ENCODE measurements at regions of chr11 and their contacts with region 1.

Region 1: DNA sequence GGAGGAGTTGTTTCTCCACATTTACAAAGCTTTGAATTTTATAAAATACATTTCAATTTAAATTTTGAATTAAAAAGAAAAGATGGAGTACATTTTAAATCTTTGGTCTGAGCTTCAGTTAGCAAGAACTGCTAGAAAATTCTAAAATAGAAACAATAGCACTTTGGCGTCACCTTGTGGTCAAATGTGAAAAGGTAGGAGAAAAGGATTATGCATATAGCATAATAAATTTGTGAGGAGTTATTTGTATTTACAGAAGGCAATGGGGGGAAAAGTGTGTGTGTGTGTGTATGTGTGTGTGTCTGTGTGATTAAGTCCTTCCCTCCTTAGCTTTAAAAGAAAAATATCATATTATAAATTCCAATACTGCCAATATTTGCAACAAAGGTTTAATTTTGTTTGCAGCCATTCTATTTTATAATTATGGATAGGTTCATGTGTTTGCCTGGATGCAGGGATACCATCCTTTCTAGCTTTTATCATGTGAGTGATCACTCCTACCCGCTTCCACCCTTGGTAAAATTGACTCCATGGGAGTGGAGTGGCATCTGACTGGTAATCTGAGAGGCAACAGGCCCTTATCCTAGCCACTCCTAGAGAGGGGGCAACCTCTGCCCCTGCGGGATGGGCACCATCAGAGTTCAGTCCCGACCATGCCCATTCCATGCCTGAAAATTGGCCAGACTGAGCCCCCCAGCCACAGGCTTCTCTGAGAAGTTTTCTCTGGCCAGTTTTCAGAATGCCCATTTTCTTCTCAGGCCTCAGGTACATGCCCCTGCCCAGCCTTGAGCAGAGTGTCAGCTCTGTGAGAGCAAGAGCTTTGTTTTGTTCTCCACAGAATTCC is 13.6 kb upstream of the LGR4 start:
- DNase-seq: no peak
- H3K4me3 Mint-ChIP-seq: no peak overlapping the region
- H3K27ac Mint-ChIP-seq: no peak overlapping the region
- H3K4me1 Mint-ChIP-seq: no peaks in the 10 kb centered on the region
- H3K27me3 Mint-ChIP-seq: no peaks in the 10 kb centered on the region

Region 2: DNA sequence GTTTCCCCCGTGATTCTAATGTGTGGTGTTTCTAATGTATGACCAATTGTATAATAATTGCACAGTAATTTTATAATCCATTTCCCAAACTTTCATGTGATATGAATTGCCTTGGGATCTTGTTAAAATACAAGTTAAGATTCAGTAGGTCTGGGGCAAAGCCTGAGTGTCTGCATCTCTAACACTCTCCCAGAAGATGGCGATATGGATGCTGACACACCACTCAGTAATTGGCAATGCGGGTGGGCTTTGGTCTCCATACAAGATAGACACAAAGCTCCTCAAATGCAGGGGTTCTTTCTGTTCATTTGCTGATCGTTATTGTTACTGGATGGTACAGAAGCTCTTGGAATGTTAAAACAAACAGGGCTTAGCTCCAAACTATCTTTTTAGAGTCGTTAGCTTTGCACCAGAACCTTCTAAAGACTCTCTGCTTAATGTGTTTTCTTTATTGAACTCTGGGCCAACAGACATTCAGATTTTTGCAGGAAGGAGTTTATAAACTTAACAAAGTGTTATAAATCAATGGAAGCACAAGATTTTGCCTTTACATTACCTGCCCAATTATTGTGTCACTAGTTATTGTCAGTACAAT is 1199.6 kb before region 1 on chr11:
- intact Hi-C with region 1: loop called (anchors 5 kb)
- DNase-seq: no peak
- H3K4me3 Mint-ChIP-seq: no peak overlapping the region
- H3K27ac Mint-ChIP-seq: no peak overlapping the region
- H3K4me1 Mint-ChIP-seq: peaks cover 4% of the 10 kb centered on the region
- H3K27me3 Mint-ChIP-seq: no peaks in the 10 kb centered on the region

Region 3: GRCh38 chr11:26753723-26754504 is 732.2 kb before region 1 on chr11:
- intact Hi-C with region 1: loop called (anchors 5 kb)
- DNase-seq: no peak
- H3K4me3 Mint-ChIP-seq: no peak overlapping the region
- H3K27ac Mint-ChIP-seq: no peak overlapping the region
- H3K4me1 Mint-ChIP-seq: no peaks in the 10 kb centered on the region
- H3K27me3 Mint-ChIP-seq: no peaks in the 10 kb centered on the region

Region 4: GRCh38 chr11:27183672-27184457 is 302.3 kb before region 1 on chr11:
- intact Hi-C with region 1: loop called (anchors 1 kb)
- DNase-seq: no peak
- H3K4me3 Mint-ChIP-seq: no peak overlapping the region
- H3K27ac Mint-ChIP-seq: no peak overlapping the region
- H3K4me1 Mint-ChIP-seq: no peaks in the 10 kb centered on the region
- H3K27me3 Mint-ChIP-seq: peaks cover 11% of the 10 kb centered on the region

Region 5: GRCh38 chr11:27296497-27296896 is 189.7 kb before region 1 on chr11:
- intact Hi-C with region 1: loop called (anchors 5 kb)
- DNase-seq: no peak
- H3K4me3 Mint-ChIP-seq: no peak overlapping the region
- H3K27ac Mint-ChIP-seq: no peak overlapping the region
- H3K4me1 Mint-ChIP-seq: peaks cover 5% of the 10 kb centered on the region
- H3K27me3 Mint-ChIP-seq: peaks cover 22% of the 10 kb centered on the region

Region 6: DNA sequence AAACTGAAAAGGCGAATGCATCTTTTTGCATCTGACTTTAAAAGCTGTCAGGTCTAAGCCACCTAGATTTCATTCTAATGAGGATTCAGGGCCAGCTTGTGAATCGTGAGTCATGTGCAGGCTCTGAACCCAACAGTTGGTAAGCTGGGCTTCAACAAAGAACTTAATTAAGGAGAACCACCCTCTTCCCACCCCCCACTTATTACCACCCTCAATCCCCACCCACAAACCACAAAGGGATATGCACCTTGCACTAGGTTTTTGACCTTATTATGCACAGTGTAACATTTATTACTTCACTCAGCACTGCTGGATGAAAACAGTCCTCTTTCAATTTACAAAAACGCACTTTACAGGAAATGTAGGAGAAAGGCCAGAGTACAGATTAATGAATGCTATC is 114.5 kb after region 1 on chr11:
- intact Hi-C with region 1: no loop called
- DNase-seq: no peak
- H3K4me3 Mint-ChIP-seq: no peak overlapping the region
- H3K27ac Mint-ChIP-seq: no peak overlapping the region
- H3K4me1 Mint-ChIP-seq: no peaks in the 10 kb centered on the region
- H3K27me3 Mint-ChIP-seq: no peaks in the 10 kb centered on the region

Measured in activated T-helper 2 cell treated with anti-CD3 and anti-CD28 coated beads, Interferon-gamma antibody, Interleukin-2, Interleukin-4, amounts not matched to agents 10 μg/mL and 5 μg/mL and 100 μg/mL, durations not matched to agents 14 hours and 24 hours and 36 hours (primary cell).